CD8-positive, alpha-beta T cell (primary cell): ENCODE measurements at regions of chr21 and their contacts with region 1.

Region 1: DNA sequence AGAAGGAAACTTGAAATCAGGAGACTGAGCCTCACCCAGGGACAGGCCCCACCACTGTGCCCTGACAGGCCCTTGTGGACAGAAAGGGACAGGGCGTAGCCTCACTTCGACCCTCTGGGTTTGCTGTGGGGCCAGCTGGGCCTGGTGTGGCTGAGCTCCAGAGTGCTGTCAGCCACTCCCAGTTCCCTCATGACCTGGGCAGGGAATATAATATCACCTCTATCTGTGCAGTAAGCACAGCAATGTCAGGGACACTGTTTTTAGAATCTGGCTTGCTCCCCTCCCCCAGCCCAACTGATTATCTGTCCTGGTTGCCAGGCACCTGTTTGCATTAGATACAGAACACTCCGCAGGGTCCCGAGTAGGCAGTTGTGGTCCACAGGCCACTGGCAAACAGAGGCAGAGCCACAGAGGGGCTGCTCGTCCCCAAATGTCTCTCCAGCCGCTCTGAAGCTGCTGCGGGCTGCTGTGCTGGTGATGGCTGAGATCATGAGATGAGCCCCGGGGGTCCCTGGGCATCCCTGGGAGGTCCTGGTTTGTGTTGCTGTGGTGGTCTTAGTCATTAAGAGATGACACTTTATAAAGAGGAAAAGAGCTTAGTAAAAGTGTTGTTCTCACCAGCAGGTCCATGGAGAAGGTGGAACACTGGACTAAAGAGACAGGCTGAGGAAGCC is 51.6 kb downstream of the ETS2 start:
- DNase-seq: no peak
- ATAC-seq: no peak
- H3K4me3 ChIP-seq: no peak overlapping the region
- H3K4me3 Mint-ChIP-seq: no peak overlapping the region
- H3K27ac ChIP-seq: no peak overlapping the region
- H3K27ac Mint-ChIP-seq: no peak overlapping the region
- H3K4me1 ChIP-seq: peaks cover 2% of the 10 kb centered on the region
- H3K4me1 Mint-ChIP-seq: peaks cover 6% of the 10 kb centered on the region
- H3K27me3 ChIP-seq: no peaks in the 10 kb centered on the region
- H3K27me3 Mint-ChIP-seq: peaks cover 4% of the 10 kb centered on the region
- CTCF ChIP-seq: no peak

Region 2: GRCh38 chr21:38875694-38876492 is 18.6 kb after region 1 on chr21:
- CTCF ChIA-PET with region 1: no interaction called
- POLR2A ChIA-PET with region 1: no interaction called
- intact Hi-C with region 1: loop called in 1 of 2 experiments (anchors 2 kb)
- DNase-seq: no peak
- ATAC-seq: no peak
- H3K4me3 ChIP-seq: no peak overlapping the region
- H3K4me3 Mint-ChIP-seq: no peak overlapping the region
- H3K27ac ChIP-seq: no peak overlapping the region
- H3K27ac Mint-ChIP-seq: no peak overlapping the region
- H3K4me1 ChIP-seq: no peaks in the 10 kb centered on the region
- H3K4me1 Mint-ChIP-seq: no peaks in the 10 kb centered on the region
- H3K27me3 ChIP-seq: no peaks in the 10 kb centered on the region
- H3K27me3 Mint-ChIP-seq: no peaks in the 10 kb centered on the region
- CTCF ChIP-seq: no peak